Caco-2 (cell line): ENCODE measurements at regions of chr11 and their contacts with region 1.

Region 1: DNA sequence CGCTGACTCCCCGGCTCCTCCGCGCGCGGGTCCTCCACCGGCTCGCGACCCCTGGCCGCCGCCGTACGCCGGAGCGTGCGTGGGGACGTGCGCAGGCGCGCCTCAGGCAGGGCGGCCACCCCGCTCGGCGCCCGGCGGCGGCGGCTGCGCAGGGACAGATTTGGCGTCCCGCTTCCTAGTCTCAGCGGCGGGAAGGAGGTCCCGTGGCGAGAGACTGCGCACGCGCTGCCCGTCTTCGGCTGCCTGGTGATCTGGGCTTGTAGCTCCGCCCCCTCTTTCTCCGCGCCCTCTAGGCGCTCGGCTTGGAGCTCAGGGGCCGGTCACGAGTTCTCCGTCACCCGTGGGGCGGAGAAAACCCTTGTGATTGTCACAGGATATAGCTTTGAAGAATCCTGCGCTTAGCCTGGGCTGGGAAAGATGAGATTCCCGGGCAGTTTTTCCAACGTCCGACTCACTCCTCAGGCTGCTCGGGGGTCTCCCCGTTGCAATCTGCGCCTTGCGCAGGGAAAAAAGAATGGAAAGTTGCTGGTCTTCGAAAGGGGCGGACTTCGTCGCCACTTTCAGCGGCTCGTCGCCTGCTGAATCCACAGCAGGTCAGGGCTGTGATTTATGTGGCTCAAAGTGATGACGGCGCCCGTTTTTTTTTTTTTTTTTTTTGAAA is at the start of gene PATL1:
- DNase-seq: peak; percentile 99
- H3K4me3 ChIP-seq: peak within 1 kb of the TSS; percentile 96
- H3K4me3 Mint-ChIP-seq: peak within 1 kb of the TSS; percentile 96
- H3K27ac Mint-ChIP-seq: peak within 1 kb of the TSS; percentile 100
- H3K4me1 ChIP-seq: peaks cover 5% of the 10 kb centered on the region
- H3K4me1 Mint-ChIP-seq: peaks cover 14% of the 10 kb centered on the region
- H3K27me3 ChIP-seq: no peaks in the 10 kb centered on the region
- H3K27me3 Mint-ChIP-seq: no peaks in the 10 kb centered on the region
- CTCF ChIP-seq: no peak
- total RNA-seq, gene PATL1: 57.8 and 61.4 TPM in 2 replicates

Region 2: DNA sequence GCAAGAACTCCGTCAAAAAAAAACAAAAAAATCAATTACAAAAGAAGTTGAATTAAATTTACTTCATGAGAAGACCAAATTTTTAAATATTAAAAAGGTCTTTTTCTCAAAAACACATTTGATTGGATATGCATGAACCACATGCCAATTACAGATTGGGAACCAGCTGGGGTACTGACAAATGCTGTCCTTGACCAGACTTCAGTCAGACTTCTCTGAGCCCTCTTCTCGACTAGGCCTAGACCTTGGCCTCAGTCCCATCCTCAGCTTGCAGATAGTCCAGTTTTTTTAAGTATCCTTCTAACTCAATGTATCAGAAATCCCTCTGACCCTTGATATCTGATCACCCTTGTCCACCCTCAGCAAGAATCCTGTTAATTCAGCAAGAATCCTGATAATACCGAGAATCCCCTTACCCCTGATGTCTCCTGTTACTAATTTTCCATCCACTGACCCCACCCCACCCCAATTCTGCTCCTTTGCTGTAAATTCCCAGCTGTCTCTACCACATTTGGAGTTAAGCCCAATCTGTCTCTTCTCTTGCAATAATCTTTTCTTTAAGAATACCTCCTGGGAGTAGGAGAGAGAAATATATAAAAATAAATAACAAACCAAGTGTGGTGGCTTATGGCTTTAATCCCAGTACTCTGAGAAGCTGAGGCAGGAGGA is 126.8 kb before region 1 on chr11:
- CTCF ChIA-PET with region 1: interaction called, 11 read pairs
- POLR2A ChIA-PET with region 1: interaction called, 3 read pairs
- intact Hi-C with region 1: no loop called
- DNase-seq: no peak
- H3K4me3 ChIP-seq: no peak overlapping the region
- H3K4me3 Mint-ChIP-seq: no peak overlapping the region
- H3K27ac Mint-ChIP-seq: no peak overlapping the region
- H3K4me1 ChIP-seq: peaks cover 9% of the 10 kb centered on the region
- H3K4me1 Mint-ChIP-seq: peaks cover 6% of the 10 kb centered on the region
- H3K27me3 ChIP-seq: no peaks in the 10 kb centered on the region
- H3K27me3 Mint-ChIP-seq: no peaks in the 10 kb centered on the region
- CTCF ChIP-seq: no peak

Region 3: GRCh38 chr11:59560702-59561469 is 108.2 kb before region 1 on chr11:
- CTCF ChIA-PET with region 1: no interaction called
- POLR2A ChIA-PET with region 1: interaction called, 16 read pairs
- intact Hi-C with region 1: loop called (anchors 5 kb)
- DNase-seq: peak; percentile 88 to 92
- H3K4me3 ChIP-seq: peak overlapping the region; percentile 64
- H3K4me3 Mint-ChIP-seq: peak overlapping the region; percentile 75
- H3K27ac Mint-ChIP-seq: peak overlapping the region; percentile 74
- H3K4me1 ChIP-seq: peaks cover 8% of the 10 kb centered on the region; the same call in 1 of the 2 replicates
- H3K4me1 Mint-ChIP-seq: peaks cover 19% of the 10 kb centered on the region
- H3K27me3 ChIP-seq: no peaks in the 10 kb centered on the region
- H3K27me3 Mint-ChIP-seq: no peaks in the 10 kb centered on the region
- CTCF ChIP-seq: no peak

Region 4: GRCh38 chr11:59598961-59599360 is 70.1 kb before region 1 on chr11:
- CTCF ChIA-PET with region 1: no interaction called
- POLR2A ChIA-PET with region 1: no interaction called
- intact Hi-C with region 1: no loop called
- DNase-seq: no peak
- H3K4me3 ChIP-seq: no peak overlapping the region
- H3K4me3 Mint-ChIP-seq: no peak overlapping the region
- H3K27ac Mint-ChIP-seq: no peak overlapping the region
- H3K4me1 ChIP-seq: no peaks in the 10 kb centered on the region
- H3K4me1 Mint-ChIP-seq: no peaks in the 10 kb centered on the region
- H3K27me3 ChIP-seq: no peaks in the 10 kb centered on the region
- H3K27me3 Mint-ChIP-seq: no peaks in the 10 kb centered on the region
- CTCF ChIP-seq: no peak

Region 5: GRCh38 chr11:59647245-59647980 is 21.7 kb before region 1 on chr11:
- CTCF ChIA-PET with region 1: no interaction called
- POLR2A ChIA-PET with region 1: interaction called, 16 read pairs
- intact Hi-C with region 1: no loop called
- DNase-seq: no peak
- H3K4me3 ChIP-seq: no peak overlapping the region
- H3K4me3 Mint-ChIP-seq: no peak overlapping the region
- H3K27ac Mint-ChIP-seq: no peak overlapping the region
- H3K4me1 ChIP-seq: 0 out of 2 replicates have a peak, but pooled peaks cover 3% of the 10 kb centered on the region
- H3K4me1 Mint-ChIP-seq: no peaks in the 10 kb centered on the region
- H3K27me3 ChIP-seq: no peaks in the 10 kb centered on the region
- H3K27me3 Mint-ChIP-seq: no peaks in the 10 kb centered on the region
- CTCF ChIP-seq: no peak

Region 6: GRCh38 chr11:59802639-59803176 is 133.6 kb after region 1 on chr11:
- CTCF ChIA-PET with region 1: interaction called, 4 read pairs
- POLR2A ChIA-PET with region 1: no interaction called
- intact Hi-C with region 1: loop called (anchors 2 kb)
- DNase-seq: peak in 1 of 2 experiments; percentile 68
- H3K4me3 ChIP-seq: no peak overlapping the region
- H3K4me3 Mint-ChIP-seq: no peak overlapping the region
- H3K27ac Mint-ChIP-seq: no peak overlapping the region
- H3K4me1 ChIP-seq: 0 out of 2 replicates have a peak, but pooled peaks cover 9% of the 10 kb centered on the region
- H3K4me1 Mint-ChIP-seq: peaks cover 19% of the 10 kb centered on the region
- H3K27me3 ChIP-seq: no peaks in the 10 kb centered on the region
- H3K27me3 Mint-ChIP-seq: no peaks in the 10 kb centered on the region
- CTCF ChIP-seq: peak; percentile 60 to 68